ENCODE measurements at regions of chr5 and their contacts with region 1.

Region 1: GRCh38 chr5:38404667-38405276 is 146.4 kb downstream of the EGFLAM start:
- DNase-seq: no peak
- ATAC-seq: peak; percentile 63; the same call in 1 of the 2 replicates
- H3K4me3 ChIP-seq: no peak overlapping the region
- H3K27ac ChIP-seq: no peak overlapping the region
- H3K4me1 ChIP-seq: no peaks in the 10 kb centered on the region
- H3K27me3 ChIP-seq: peaks cover 58% of the 10 kb centered on the region
- CTCF ChIP-seq: peak; percentile 61

Region 2: GRCh38 chr5:37837414-37838032 is 567.2 kb before region 1 on chr5:
- CTCF ChIA-PET with region 1: no interaction called
- POLR2A ChIA-PET with region 1: no interaction called
- in situ Hi-C with region 1: no loop called
- intact Hi-C with region 1: no loop called
- DNase-seq: peak; percentile 38
- ATAC-seq: peak; percentile 79
- H3K4me3 ChIP-seq: peak overlapping the region; percentile 35 to 52
- H3K27ac ChIP-seq: no peak overlapping the region
- H3K4me1 ChIP-seq: peaks cover 13% of the 10 kb centered on the region
- H3K27me3 ChIP-seq: peaks cover 31% of the 10 kb centered on the region
- CTCF ChIP-seq: peak; percentile 92

Region 3: DNA sequence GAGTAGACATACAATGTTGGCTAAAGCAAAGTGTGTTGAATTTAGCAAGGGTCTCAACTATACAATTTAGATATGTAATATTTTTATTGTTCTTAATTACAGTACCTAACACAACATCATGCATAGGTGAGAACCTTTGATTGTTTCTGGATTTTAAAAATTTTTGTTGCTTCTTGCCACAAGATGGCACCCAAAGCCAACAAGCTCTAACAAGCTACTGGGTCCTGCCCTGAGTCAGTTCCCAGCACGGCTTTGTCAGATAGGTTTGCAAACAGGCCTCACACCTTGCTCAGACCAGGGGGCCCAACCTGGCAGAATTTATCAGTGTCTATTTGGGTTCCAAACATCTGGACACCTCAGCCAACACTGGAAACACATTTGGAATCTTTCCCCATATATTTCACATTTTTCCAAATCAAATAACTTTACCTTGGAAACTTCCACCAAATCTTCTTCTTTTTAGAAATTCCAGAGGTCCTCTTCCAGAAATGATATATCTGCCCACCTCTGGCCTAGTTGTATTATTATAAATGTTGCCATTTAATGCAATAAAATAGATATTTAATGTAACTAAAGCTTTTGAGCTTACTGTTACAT is 195.9 kb before region 1 on chr5:
- CTCF ChIA-PET with region 1: no interaction called
- POLR2A ChIA-PET with region 1: no interaction called
- in situ Hi-C with region 1: no loop called
- intact Hi-C with region 1: loop called (anchors 10 kb)
- DNase-seq: peak; percentile 28
- ATAC-seq: peak; percentile 81
- H3K4me3 ChIP-seq: no peak overlapping the region
- H3K27ac ChIP-seq: no peak overlapping the region
- H3K4me1 ChIP-seq: no peaks in the 10 kb centered on the region
- H3K27me3 ChIP-seq: peaks cover 9% of the 10 kb centered on the region; the same call in 1 of the 2 replicates
- CTCF ChIP-seq: peak; percentile 82

Region 4: GRCh38 chr5:38373743-38374142 is 31.0 kb before region 1 on chr5:
- CTCF ChIA-PET with region 1: no interaction called
- POLR2A ChIA-PET with region 1: no interaction called
- in situ Hi-C with region 1: no loop called
- intact Hi-C with region 1: no loop called
- DNase-seq: no peak
- ATAC-seq: no peak
- H3K4me3 ChIP-seq: no peak overlapping the region
- H3K27ac ChIP-seq: no peak overlapping the region
- H3K4me1 ChIP-seq: no peaks in the 10 kb centered on the region
- H3K27me3 ChIP-seq: peaks cover 12% of the 10 kb centered on the region
- CTCF ChIP-seq: no peak